Transverse colon (tissue), 4 donors: ENCODE measurements at regions of chr6 and their contacts with region 1.

Region 1: DNA sequence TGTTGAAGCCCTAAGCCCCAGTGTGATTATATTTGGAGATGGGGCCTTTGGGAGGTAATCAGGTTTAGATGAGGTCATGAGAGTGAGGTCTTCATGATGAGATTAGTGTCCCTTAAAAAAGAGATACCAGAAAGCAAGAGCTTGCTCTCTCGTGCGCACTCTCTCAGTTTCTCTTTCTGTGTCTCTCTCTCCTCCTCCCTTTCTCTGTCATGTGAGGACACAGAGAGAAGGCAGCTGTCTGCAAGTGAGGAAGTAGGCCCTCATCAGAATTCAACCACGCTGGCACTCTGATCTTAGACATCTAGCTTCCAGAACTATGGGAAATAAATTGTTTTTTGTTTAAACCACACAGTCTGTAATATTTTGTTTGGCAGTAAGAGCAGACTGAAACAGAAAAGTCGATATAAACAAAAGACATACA is 180.5 kb downstream of the IBTK start:
- DNase-seq: peak; percentile 15
- H3K4me3 ChIP-seq: no peak overlapping the region
- H3K27ac ChIP-seq: no peak overlapping the region
- H3K4me1 ChIP-seq: peaks cover 0 to 2% (median under 1%) of the 10 kb centered on the region in 4 donors
- H3K27me3 ChIP-seq: no peaks in the 10 kb centered on the region
- CTCF ChIP-seq: no peak
- EP300 ChIP-seq: no peak
- POLR2A ChIP-seq: no peak

Region 2: GRCh38 chr6:82095091-82095490 is 28.1 kb after region 1 on chr6:
- in situ Hi-C with region 1: no loop called
- intact Hi-C with region 1: loop called (anchors 1 kb)
- DNase-seq: no peak
- H3K4me3 ChIP-seq: no peak overlapping the region
- H3K27ac ChIP-seq: no peak overlapping the region
- H3K4me1 ChIP-seq: no peaks in the 10 kb centered on the region
- H3K27me3 ChIP-seq: no peaks in the 10 kb centered on the region
- CTCF ChIP-seq: no peak
- EP300 ChIP-seq: no peak
- POLR2A ChIP-seq: no peak